Pancreas (tissue), 10 donors: ENCODE measurements at regions of chr17 and their contacts with region 1.

Region 1: DNA sequence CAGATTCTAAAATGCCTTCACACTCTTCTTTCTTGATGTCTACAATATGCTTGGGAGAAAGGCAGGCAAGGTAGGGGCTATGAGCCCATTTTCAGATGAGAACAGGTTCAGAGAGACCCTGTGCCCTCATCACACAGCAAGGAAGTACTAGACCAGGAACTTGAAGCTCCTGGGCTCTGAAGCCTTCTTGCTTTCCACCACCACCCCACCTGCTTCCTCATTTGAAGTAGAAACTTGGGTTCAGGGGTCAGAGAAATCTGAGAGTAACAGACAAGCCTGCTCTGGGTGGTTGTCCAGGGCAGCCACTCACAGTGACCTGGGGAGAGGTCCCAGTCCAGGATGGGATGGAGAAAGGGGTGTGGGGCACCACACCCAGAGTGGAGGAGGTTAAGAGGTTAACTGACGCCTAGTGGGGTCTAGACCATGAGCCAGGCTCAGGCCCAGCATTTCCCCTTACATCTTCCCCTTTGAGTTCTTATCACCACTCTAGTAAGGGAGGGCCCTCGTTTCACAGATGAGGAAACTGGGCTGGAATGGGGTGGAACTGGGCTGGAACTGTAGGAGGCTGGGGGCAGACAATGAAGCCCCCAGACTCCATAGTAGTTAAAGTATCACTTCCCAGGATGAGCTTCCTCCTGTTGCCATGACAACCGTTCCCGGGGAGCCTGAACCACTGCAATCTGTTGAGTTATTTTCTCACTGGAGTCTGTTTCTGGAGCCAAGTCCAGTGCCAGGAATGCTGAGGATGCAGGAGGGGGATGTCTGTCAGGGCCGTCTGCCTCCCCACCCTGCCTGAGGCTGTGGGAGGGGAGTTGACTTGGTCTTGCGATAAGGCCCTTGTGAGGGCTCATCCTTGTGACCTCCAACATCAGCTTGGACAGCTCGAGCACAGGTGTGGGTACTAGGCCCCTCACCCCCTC is 16.2 kb upstream of the PHF12 start:
- DNase-seq: no peak
- ATAC-seq: peak in 1 of 4 donors; percentile 7
- H3K4me3 ChIP-seq: no peak overlapping the region
- H3K27ac ChIP-seq: no peak overlapping the region
- H3K4me1 ChIP-seq: peaks cover 0 to 9% (median 8%) of the 10 kb centered on the region in 3 donors
- H3K27me3 ChIP-seq: no peaks in the 10 kb centered on the region
- CTCF ChIP-seq: no peak

Region 2: GRCh38 chr17:29111816-29112499 is 144.5 kb after region 1 on chr17:
- intact Hi-C with region 1: loop called in 2 of 3 experiments (anchors 2 to 10 kb)
- DNase-seq: peak; percentile 60 to 93 (median 84)
- ATAC-seq: peak in 3 of 4 donors; percentile 32 to 54 (median 40)
- H3K4me3 ChIP-seq: no peak overlapping the region
- H3K27ac ChIP-seq: peak overlapping the region in 2 of 4 donors; percentile 7 to 12
- H3K4me1 ChIP-seq: peaks cover 37 to 48% (median 41%) of the 10 kb centered on the region in 3 donors
- H3K27me3 ChIP-seq: no peaks in the 10 kb centered on the region
- CTCF ChIP-seq: peak; percentile 85 to 93 (median 90)

Region 3: GRCh38 chr17:29120433-29120832 is 153.0 kb after region 1 on chr17:
- intact Hi-C with region 1: loop called in 2 of 3 experiments (anchors 2 to 10 kb)
- DNase-seq: no peak
- ATAC-seq: no peak
- H3K4me3 ChIP-seq: no peak overlapping the region
- H3K27ac ChIP-seq: no peak overlapping the region
- H3K4me1 ChIP-seq: peaks cover 0 to 4% (median 0%) of the 10 kb centered on the region in 3 donors
- H3K27me3 ChIP-seq: no peaks in the 10 kb centered on the region
- CTCF ChIP-seq: no peak